H1 (cell line): ENCODE measurements at regions of chrX and their contacts with region 1.

Region 1: GRCh38 chrX:24395775-24396174 is 35.3 kb downstream of the SUPT20HL1 start:
- DNase-seq: no peak
- H3K4me3 ChIP-seq: no peak overlapping the region
- H3K27ac ChIP-seq: no peak overlapping the region
- H3K4me1 ChIP-seq: no peaks in the 10 kb centered on the region; a peak in 1 of 7 replicates
- H3K27me3 ChIP-seq: no peaks in the 10 kb centered on the region
- CTCF ChIP-seq: peak in 2 of 3 experiments; percentile 70 to 79; a peak in 3 of 4 replicates
- EP300 ChIP-seq: no peak
- POLR2A ChIP-seq: no peak
- RAD21 ChIP-seq: peak; percentile 87 to 91

Region 2: DNA sequence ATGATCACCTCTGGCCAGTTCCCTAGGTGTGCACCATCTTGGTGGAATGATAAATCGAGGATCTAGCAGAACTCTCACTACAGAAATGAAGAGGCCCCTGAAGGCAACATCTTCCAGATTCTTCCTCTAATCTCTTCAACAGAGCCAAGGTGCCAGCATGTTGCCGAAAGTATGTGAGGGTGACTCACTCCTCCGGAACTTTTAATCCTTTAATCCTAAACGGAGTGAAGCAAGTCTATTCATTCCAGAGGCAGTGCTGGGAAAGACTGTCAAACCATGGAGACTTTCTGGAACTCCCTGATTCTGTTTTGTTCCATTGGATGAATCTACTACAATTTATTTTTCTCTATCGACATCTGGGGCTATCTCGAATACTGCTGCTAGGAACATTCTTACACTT is 150.6 kb before region 1 on chrX:
- CTCF ChIA-PET with region 1: no interaction called
- POLR2A ChIA-PET with region 1: no interaction called
- DNase-seq: no peak
- H3K4me3 ChIP-seq: no peak overlapping the region
- H3K27ac ChIP-seq: no peak overlapping the region
- H3K4me1 ChIP-seq: 0 out of 7 replicates have a peak, but pooled peaks cover 0 to 3% (median 0%) of the 10 kb centered on the region in 4 experiments
- H3K27me3 ChIP-seq: no peaks in the 10 kb centered on the region
- CTCF ChIP-seq: no peak
- EP300 ChIP-seq: no peak
- POLR2A ChIP-seq: no peak
- RAD21 ChIP-seq: no peak

Region 3: GRCh38 chrX:24561121-24561520 is 165.3 kb after region 1 on chrX:
- CTCF ChIA-PET with region 1: interaction called, 10 read pairs
- POLR2A ChIA-PET with region 1: no interaction called
- DNase-seq: no peak
- H3K4me3 ChIP-seq: no peak overlapping the region
- H3K27ac ChIP-seq: no peak overlapping the region
- H3K4me1 ChIP-seq: no peaks in the 10 kb centered on the region
- H3K27me3 ChIP-seq: no peaks in the 10 kb centered on the region
- CTCF ChIP-seq: peak in 1 of 3 experiments; percentile 29; a peak in 2 of 4 replicates
- EP300 ChIP-seq: no peak
- POLR2A ChIP-seq: no peak
- RAD21 ChIP-seq: peak; percentile 44 to 55; a peak in 3 of 4 replicates